Activated naive CD4-positive, alpha-beta T cell treated with anti-CD3 and anti-CD28 coated beads, Interleukin-2, amount 10 ng/mL, durations not matched to agents 7 days and 5 days (primary cell): ENCODE measurements at regions of chr1 and their contacts with region 1.

Region 1: GRCh38 chr1:36650200-36651065 is 167.7 kb upstream of the CSF3R start:
- DNase-seq: peak; percentile 78
- H3K4me3 Mint-ChIP-seq: no peak overlapping the region
- H3K27ac Mint-ChIP-seq: no peak overlapping the region
- H3K4me1 Mint-ChIP-seq: peaks cover 2% of the 10 kb centered on the region
- H3K27me3 Mint-ChIP-seq: peaks cover 33% of the 10 kb centered on the region

Region 2: GRCh38 chr1:36420836-36421664 is 229.4 kb before region 1 on chr1:
- CTCF ChIA-PET with region 1: no interaction called
- DNase-seq: peak; percentile 94
- H3K4me3 Mint-ChIP-seq: peak overlapping the region; percentile 44
- H3K27ac Mint-ChIP-seq: peak overlapping the region; percentile 67
- H3K4me1 Mint-ChIP-seq: peaks cover 18% of the 10 kb centered on the region
- H3K27me3 Mint-ChIP-seq: peaks cover 4% of the 10 kb centered on the region

Region 3: GRCh38 chr1:36576118-36576517 is 74.3 kb before region 1 on chr1:
- CTCF ChIA-PET with region 1: interaction called, 10 read pairs
- DNase-seq: peak; percentile 63
- H3K4me3 Mint-ChIP-seq: no peak overlapping the region
- H3K27ac Mint-ChIP-seq: no peak overlapping the region
- H3K4me1 Mint-ChIP-seq: no peaks in the 10 kb centered on the region
- H3K27me3 Mint-ChIP-seq: peaks cover 43% of the 10 kb centered on the region